Vagina (tissue), 2 donors: ENCODE measurements at regions of chrX and their contacts with region 1.

Region 1: GRCh38 chrX:110954428-110955100 is 141.4 kb upstream of the PAK3 start:
- DNase-seq: no peak
- H3K4me3 ChIP-seq: no peak overlapping the region
- H3K27ac ChIP-seq: no peak overlapping the region
- H3K4me1 ChIP-seq: no peaks in the 10 kb centered on the region
- H3K27me3 ChIP-seq: no peaks in the 10 kb centered on the region
- CTCF ChIP-seq: no peak
- POLR2A ChIP-seq: no peak

Region 2: GRCh38 chrX:111010111-111010510 is 55.5 kb after region 1 on chrX:
- intact Hi-C with region 1: loop called (anchors 10 kb)
- DNase-seq: no peak
- H3K4me3 ChIP-seq: no peak overlapping the region
- H3K27ac ChIP-seq: no peak overlapping the region
- H3K4me1 ChIP-seq: no peaks in the 10 kb centered on the region
- H3K27me3 ChIP-seq: no peaks in the 10 kb centered on the region
- CTCF ChIP-seq: no peak
- POLR2A ChIP-seq: no peak